Heart right ventricle (tissue), 16 donors: ENCODE measurements at regions of chr3 and their contacts with region 1.

Region 1: DNA sequence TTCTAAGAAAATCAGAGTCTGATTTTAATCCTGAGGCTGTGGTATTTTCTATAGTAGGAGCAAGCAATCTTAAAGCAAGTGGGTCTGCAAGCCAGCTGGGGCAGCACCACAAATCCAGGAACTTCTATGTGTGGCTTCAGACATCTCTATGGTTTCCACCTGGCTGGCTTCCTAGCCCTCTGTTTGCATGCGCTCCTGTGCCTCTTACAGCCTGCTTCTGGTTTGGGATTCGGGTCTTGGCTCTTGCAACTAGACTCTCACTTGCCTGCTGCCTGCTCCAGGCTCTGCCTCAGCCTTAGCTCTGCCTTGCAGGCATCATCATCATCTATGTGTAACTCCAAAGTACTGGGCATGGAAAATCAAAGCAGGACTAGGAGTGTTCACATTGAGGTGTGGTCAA is 43.4 kb downstream of the MINDY4B start:
- DNase-seq: no peak
- ATAC-seq: no peak
- H3K4me3 ChIP-seq: no peak overlapping the region
- H3K27ac ChIP-seq: no peak overlapping the region
- H3K4me1 ChIP-seq: peaks cover 0 to 6% (median 0%) of the 10 kb centered on the region in 9 donors
- H3K27me3 ChIP-seq: no peaks in the 10 kb centered on the region
- CTCF ChIP-seq: no peak

Region 2: GRCh38 chr3:150727653-150728502 is 134.0 kb before region 1 on chr3:
- intact Hi-C with region 1: loop called in 4 of 10 experiments (anchors 2 to 5 kb)
- DNase-seq: no peak
- ATAC-seq: peak; percentile 38 to 90 (median 61)
- H3K4me3 ChIP-seq: no peak overlapping the region
- H3K27ac ChIP-seq: peak overlapping the region in 3 of 10 donors; percentile 56 to 77 (median 60)
- H3K4me1 ChIP-seq: peaks cover 0 to 21% (median 7%) of the 10 kb centered on the region in 9 donors
- H3K27me3 ChIP-seq: no peaks in the 10 kb centered on the region
- CTCF ChIP-seq: no peak

Region 3: DNA sequence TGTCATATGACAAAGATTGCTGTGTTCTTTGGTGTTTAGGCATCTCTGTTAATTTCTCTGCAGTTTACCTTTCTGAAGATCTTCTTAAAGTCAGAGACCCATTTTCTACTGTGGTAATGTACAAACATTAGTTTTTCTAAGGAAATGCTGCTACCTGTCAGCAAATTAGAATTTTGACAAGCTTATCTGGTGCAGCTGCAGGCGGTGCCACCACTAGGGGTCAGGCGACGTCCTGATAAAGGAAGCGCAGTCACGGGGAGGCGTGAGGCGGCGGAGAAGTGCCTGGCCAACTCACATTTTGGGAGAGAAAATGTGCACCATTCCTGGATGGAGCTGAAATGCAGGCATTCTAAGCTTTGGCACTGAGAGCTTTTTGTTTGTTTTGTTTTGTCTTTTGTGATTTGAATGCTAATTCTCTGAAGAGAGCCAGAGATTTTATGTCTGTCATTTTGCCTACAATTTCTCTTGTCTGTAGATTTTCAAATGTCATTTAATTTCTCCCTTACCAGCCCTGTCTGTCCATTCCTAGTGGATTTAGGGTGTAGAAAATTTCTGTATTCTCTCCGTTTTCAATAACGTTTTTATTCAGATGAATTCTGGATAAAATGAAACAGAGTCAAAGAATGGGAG is 74.0 kb before region 1 on chr3:
- intact Hi-C with region 1: loop called in 6 of 10 experiments (anchors 5 to 10 kb)
- DNase-seq: peak; percentile 77 to 83
- ATAC-seq: peak in 7 of 8 donors; percentile 81 to 91 (median 84)
- H3K4me3 ChIP-seq: no peak overlapping the region
- H3K27ac ChIP-seq: no peak overlapping the region
- H3K4me1 ChIP-seq: peaks cover 0 to 7% (median 0%) of the 10 kb centered on the region in 9 donors
- H3K27me3 ChIP-seq: peaks cover 0 to 14% (median 0%) of the 10 kb centered on the region in 7 donors
- CTCF ChIP-seq: peak; percentile 84 to 96 (median 91)

Region 4: GRCh38 chr3:150793609-150794008 is 68.2 kb before region 1 on chr3:
- intact Hi-C with region 1: loop called in 6 of 10 experiments (anchors 5 to 10 kb)
- DNase-seq: no peak
- ATAC-seq: no peak
- H3K4me3 ChIP-seq: no peak overlapping the region
- H3K27ac ChIP-seq: no peak overlapping the region
- H3K4me1 ChIP-seq: peaks cover 0 to 4% (median 0%) of the 10 kb centered on the region in 9 donors
- H3K27me3 ChIP-seq: peaks cover 0 to 3% (median 0%) of the 10 kb centered on the region in 7 donors
- CTCF ChIP-seq: no peak

Region 5: GRCh38 chr3:150913133-150913922 is 51.5 kb after region 1 on chr3:
- intact Hi-C with region 1: no loop called
- DNase-seq: no peak
- ATAC-seq: peak in 7 of 8 donors; percentile 41 to 92 (median 76)
- H3K4me3 ChIP-seq: no peak overlapping the region
- H3K27ac ChIP-seq: peak overlapping the region in 5 of 10 donors; percentile 5 to 67 (median 33)
- H3K4me1 ChIP-seq: peaks cover 0 to 21% (median 0%) of the 10 kb centered on the region in 9 donors
- H3K27me3 ChIP-seq: peaks cover 0 to 5% (median 0%) of the 10 kb centered on the region in 7 donors
- CTCF ChIP-seq: no peak